Transverse colon (tissue), 4 donors: ENCODE measurements at regions of chr4 and their contacts with region 1.

Region 1: DNA sequence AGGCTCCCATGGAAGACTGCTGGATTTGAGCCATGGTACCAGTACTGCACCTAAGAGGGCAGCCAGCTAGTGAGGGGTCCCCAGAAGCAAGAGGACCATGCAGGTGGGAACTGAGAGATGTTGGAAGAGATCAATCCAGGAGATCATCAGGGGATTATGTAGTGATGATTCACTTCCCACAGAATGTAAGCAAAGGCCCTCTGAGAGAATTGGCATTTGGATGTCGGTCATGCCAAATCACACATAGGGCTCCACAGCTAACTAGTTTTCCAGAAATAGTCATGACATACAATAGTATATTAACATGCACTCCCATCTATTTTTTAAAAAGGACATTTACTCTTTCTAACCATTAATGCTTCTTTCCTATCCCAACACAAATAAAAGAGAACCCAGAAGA is 112.5 kb downstream of the RASGEF1B start:
- DNase-seq: no peak
- H3K4me3 ChIP-seq: no peak overlapping the region
- H3K27ac ChIP-seq: no peak overlapping the region
- H3K4me1 ChIP-seq: no peaks in the 10 kb centered on the region
- H3K27me3 ChIP-seq: no peaks in the 10 kb centered on the region
- CTCF ChIP-seq: no peak
- EP300 ChIP-seq: no peak
- POLR2A ChIP-seq: no peak

Region 2: DNA sequence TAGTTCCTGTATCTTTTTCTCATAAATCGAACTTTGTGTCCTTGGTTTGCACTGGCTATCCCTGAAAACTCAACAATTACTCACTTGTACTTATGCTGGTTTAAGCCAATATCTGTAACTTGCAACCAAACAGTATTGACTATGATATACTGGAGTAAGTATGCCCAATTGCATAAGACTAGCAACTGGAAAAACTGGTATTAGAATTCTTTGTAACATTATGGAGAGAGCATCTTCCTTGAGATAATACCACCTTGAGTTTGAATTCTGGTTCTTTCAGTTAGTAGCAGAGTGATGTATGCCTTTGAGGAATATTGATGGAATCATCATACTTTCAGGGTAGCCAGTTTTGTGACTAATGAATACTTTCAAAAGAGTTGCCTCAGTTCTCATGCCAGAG is 300.6 kb before region 1 on chr4:
- in situ Hi-C with region 1: loop called in 1 of 4 experiments (anchors 10 kb)
- intact Hi-C with region 1: loop called (anchors 2 kb)
- DNase-seq: no peak
- H3K4me3 ChIP-seq: no peak overlapping the region
- H3K27ac ChIP-seq: no peak overlapping the region
- H3K4me1 ChIP-seq: no peaks in the 10 kb centered on the region
- H3K27me3 ChIP-seq: no peaks in the 10 kb centered on the region
- CTCF ChIP-seq: no peak
- EP300 ChIP-seq: no peak
- POLR2A ChIP-seq: no peak

Region 3: DNA sequence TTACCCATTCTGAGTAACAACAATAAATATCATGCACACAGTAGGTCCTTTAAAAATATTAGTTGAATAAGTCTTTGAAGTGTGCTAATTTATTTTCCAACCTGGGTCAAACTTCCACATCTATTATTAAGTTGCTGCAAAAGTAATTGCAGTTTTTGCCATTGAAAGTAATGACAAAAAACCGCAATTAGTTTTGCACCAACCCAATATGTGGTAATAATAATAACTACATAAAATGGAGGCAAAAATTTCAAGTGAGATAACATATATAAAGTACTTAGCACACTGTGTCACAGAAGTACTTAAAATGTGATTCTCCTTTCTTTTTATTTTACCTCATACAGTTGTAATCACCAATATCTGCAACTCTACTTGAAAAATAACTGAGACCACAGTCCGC is 282.9 kb before region 1 on chr4:
- in situ Hi-C with region 1: loop called in 2 of 4 experiments (anchors 5 to 10 kb)
- intact Hi-C with region 1: no loop called
- DNase-seq: no peak
- H3K4me3 ChIP-seq: no peak overlapping the region
- H3K27ac ChIP-seq: no peak overlapping the region
- H3K4me1 ChIP-seq: no peaks in the 10 kb centered on the region
- H3K27me3 ChIP-seq: no peaks in the 10 kb centered on the region
- CTCF ChIP-seq: no peak
- EP300 ChIP-seq: no peak
- POLR2A ChIP-seq: no peak

Region 4: DNA sequence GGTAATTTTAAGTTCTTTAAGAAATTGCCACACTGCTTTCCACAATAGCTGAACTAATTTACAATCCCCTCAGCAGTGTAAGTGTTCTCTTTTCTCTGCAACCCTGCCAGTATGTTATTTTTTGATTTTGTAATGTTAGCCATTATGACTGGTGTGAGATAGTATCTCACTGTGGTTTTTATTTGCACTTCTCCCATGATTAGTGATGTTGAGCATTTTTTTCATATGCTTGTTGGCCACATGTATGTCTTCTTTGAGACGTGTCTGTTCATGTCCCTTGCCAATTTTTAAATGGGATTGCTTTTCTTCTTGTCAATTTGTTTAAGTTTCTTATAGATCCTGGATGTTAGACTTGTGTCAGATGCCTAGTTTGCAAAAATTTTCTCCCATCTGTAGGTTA is 242.6 kb before region 1 on chr4:
- in situ Hi-C with region 1: no loop called
- intact Hi-C with region 1: no loop called
- DNase-seq: no peak
- H3K4me3 ChIP-seq: no peak overlapping the region
- H3K27ac ChIP-seq: no peak overlapping the region
- H3K4me1 ChIP-seq: no peaks in the 10 kb centered on the region
- H3K27me3 ChIP-seq: no peaks in the 10 kb centered on the region
- CTCF ChIP-seq: no peak
- EP300 ChIP-seq: no peak
- POLR2A ChIP-seq: no peak

Region 5: DNA sequence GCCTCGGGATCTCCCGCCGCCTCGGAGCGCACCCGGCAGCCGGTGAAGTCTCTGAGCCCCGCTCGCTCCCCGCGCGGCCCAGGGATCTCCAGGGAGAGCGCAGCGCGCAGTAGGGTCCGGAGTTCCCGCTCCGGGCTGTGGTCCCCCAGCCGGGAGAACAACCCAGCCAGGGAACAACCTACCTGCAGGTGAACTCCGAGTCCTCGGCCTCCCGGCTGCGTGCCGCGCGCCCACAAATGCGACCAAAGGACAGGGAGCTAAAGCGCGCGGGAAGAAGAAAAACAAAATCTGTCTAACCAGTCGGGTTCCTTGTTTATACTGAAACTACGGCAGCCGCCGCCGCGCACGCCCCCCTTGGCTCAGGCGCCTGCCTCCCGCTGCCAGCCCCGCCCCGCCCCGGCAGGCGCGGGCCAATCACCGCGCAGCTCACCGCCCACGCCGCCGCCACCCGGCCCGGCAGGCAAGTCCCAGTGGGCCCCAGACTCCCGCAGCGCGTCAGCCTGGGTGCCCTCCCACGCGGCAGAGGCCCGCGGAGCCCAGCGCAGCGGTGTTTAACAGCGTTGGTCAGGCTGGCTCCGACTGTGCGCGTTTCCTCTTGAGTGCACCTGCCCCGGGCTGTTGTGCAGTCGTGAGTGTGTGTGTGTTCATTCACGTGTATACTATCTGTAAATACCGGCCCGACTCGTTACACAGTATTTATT is 112.5 kb after region 1 on chr4 and contains the start of gene RASGEF1B:
- in situ Hi-C with region 1: no loop called
- intact Hi-C with region 1: no loop called
- DNase-seq: peak; percentile 94
- H3K4me3 ChIP-seq: peak within 1 kb of the TSS; percentile 75 to 93 (median 83)
- H3K27ac ChIP-seq: peak within 1 kb of the TSS; percentile 93 to 98 (median 97)
- H3K4me1 ChIP-seq: peaks cover 14 to 56% (median 39%) of the 10 kb centered on the region in 4 donors
- H3K27me3 ChIP-seq: no peaks in the 10 kb centered on the region
- CTCF ChIP-seq: no peak
- EP300 ChIP-seq: no peak
- POLR2A ChIP-seq: peak; percentile 91
- total RNA-seq, gene RASGEF1B: 14.1 to 31.0 (median 26.2) TPM